A549 (cell line): ENCODE measurements at regions of chr16 and their contacts with region 1.

Region 1: GRCh38 chr16:88925101-88925887 is 51.7 kb downstream of the CBFA2T3 start:
- DNase-seq: peak; percentile 61 to 87
- ATAC-seq: peak; percentile 86 to 89
- H3K4me3 ChIP-seq: no peak overlapping the region
- H3K27ac ChIP-seq: peak overlapping the region; percentile 54 to 86; a peak in 5 of 6 replicates
- H3K4me1 ChIP-seq: peaks cover 20% of the 10 kb centered on the region
- CTCF ChIP-seq: peak; percentile 27; the same call in 2 of the 3 replicates
- EP300 ChIP-seq: no peak
- POLR2A ChIP-seq: no peak
- RAD21 ChIP-seq: peak; percentile 27 to 33; a peak in 3 of 5 replicates

Region 2: GRCh38 chr16:88821168-88821850 is 104.0 kb before region 1 on chr16:
- CTCF ChIA-PET with region 1: no interaction called
- POLR2A ChIA-PET with region 1: no interaction called
- DNase-seq: no peak
- ATAC-seq: no peak
- H3K4me3 ChIP-seq: no peak overlapping the region
- H3K27ac ChIP-seq: no peak overlapping the region
- H3K4me1 ChIP-seq: no peaks in the 10 kb centered on the region
- CTCF ChIP-seq: no peak
- EP300 ChIP-seq: no peak
- POLR2A ChIP-seq: no peak
- RAD21 ChIP-seq: no peak

Region 3: GRCh38 chr16:88941913-88942909 is 16.9 kb after region 1 on chr16:
- CTCF ChIA-PET with region 1: interaction called, 28 read pairs
- POLR2A ChIA-PET with region 1: no interaction called
- DNase-seq: peak; percentile 29 to 81
- ATAC-seq: peak; percentile 72 to 80
- H3K4me3 ChIP-seq: peak overlapping the region; percentile 80
- H3K27ac ChIP-seq: peak overlapping the region; percentile 58 to 79; a peak in 5 of 6 replicates
- H3K4me1 ChIP-seq: 0 out of 3 replicates have a peak, but pooled peaks cover 6% of the 10 kb centered on the region
- CTCF ChIP-seq: peak; percentile 92
- EP300 ChIP-seq: no peak
- POLR2A ChIP-seq: no peak
- RAD21 ChIP-seq: peak; percentile 68 to 84